SK-N-SH (cell line): ENCODE measurements at regions of chr16 and their contacts with region 1.

Region 1: GRCh38 chr16:67521095-67521804 is 7.4 kb upstream of the RIPOR1 start:
- DNase-seq: peak; percentile 89
- H3K4me3 ChIP-seq: peak overlapping the region; percentile 52 to 73
- H3K27ac ChIP-seq: peak overlapping the region; percentile 86 to 91
- H3K4me1 ChIP-seq: peaks cover 3 to 5% of the 10 kb centered on the region in 2 experiments; a peak in 2 of 4 replicates
- H3K27me3 ChIP-seq: no peaks in the 10 kb centered on the region
- CTCF ChIP-seq: peak; percentile 84
- EP300 ChIP-seq: peak in 1 of 2 experiments; percentile 2; a peak in 1 of 4 replicates
- RAD21 ChIP-seq: peak; percentile 94

Region 2: DNA sequence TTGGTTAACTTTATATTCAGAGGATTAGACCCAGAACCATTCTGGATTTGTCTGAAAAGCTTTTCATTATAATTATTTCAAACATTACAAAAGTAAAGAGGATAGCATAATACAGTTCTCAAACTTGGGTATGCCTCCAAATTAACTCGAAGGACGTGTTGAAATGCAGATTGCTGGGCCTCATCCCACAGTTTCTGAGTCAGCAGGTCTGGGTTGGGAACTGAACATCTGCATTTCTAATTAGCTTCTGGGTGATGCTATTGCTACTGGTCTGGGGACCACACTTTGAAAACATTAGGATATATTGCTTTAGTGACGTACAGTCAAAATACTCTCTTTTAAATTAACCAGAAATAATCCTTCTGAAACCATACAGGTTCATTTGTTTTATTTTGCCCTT is 138.0 kb before region 1 on chr16:
- CTCF ChIA-PET with region 1: no interaction called
- POLR2A ChIA-PET with region 1: no interaction called
- DNase-seq: no peak
- H3K4me3 ChIP-seq: no peak overlapping the region
- H3K27ac ChIP-seq: no peak overlapping the region
- H3K4me1 ChIP-seq: peaks cover 4 to 10% of the 10 kb centered on the region in 2 experiments; a peak in 2 of 4 replicates
- H3K27me3 ChIP-seq: no peaks in the 10 kb centered on the region
- CTCF ChIP-seq: no peak
- EP300 ChIP-seq: no peak
- RAD21 ChIP-seq: no peak

Region 3: GRCh38 chr16:67480833-67481560 is 40.3 kb before region 1 on chr16 and contains the start of gene ATP6V0D1:
- CTCF ChIA-PET with region 1: interaction called, 57 read pairs
- POLR2A ChIA-PET with region 1: interaction called, 6 read pairs
- DNase-seq: peak; percentile 98
- H3K4me3 ChIP-seq: peak within 1 kb of the TSS; percentile 80 to 100
- H3K27ac ChIP-seq: peak within 1 kb of the TSS; percentile 89 to 91
- H3K4me1 ChIP-seq: peaks cover 6 to 19% of the 10 kb centered on the region in 2 experiments; a peak in 1 of 4 replicates
- H3K27me3 ChIP-seq: no peaks in the 10 kb centered on the region
- CTCF ChIP-seq: peak; percentile 79
- EP300 ChIP-seq: no peak
- RAD21 ChIP-seq: peak; percentile 68
- polyA plus RNA-seq, gene ATP6V0D1: 111 and 135 TPM in 2 replicates

Region 4: GRCh38 chr16:67504041-67505021 is 16.9 kb before region 1 on chr16:
- CTCF ChIA-PET with region 1: interaction called, 104 read pairs
- POLR2A ChIA-PET with region 1: no interaction called
- DNase-seq: no peak
- H3K4me3 ChIP-seq: no peak overlapping the region
- H3K27ac ChIP-seq: no peak overlapping the region
- H3K4me1 ChIP-seq: no peaks in the 10 kb centered on the region
- H3K27me3 ChIP-seq: no peaks in the 10 kb centered on the region
- CTCF ChIP-seq: no peak
- EP300 ChIP-seq: no peak
- RAD21 ChIP-seq: no peak

Region 5: GRCh38 chr16:67555795-67556212 is 34.6 kb after region 1 on chr16:
- CTCF ChIA-PET with region 1: interaction called, 86 read pairs
- POLR2A ChIA-PET with region 1: no interaction called
- DNase-seq: no peak
- H3K4me3 ChIP-seq: no peak overlapping the region
- H3K27ac ChIP-seq: peak overlapping the region in 1 of 2 experiments; percentile 51; a peak in 2 of 4 replicates
- H3K4me1 ChIP-seq: peaks cover under 1 to 11% of the 10 kb centered on the region in 2 experiments; a peak in 2 of 4 replicates
- H3K27me3 ChIP-seq: no peaks in the 10 kb centered on the region
- CTCF ChIP-seq: no peak
- EP300 ChIP-seq: no peak
- RAD21 ChIP-seq: no peak

Region 6: GRCh38 chr16:67632415-67633172 is 111.3 kb after region 1 on chr16:
- CTCF ChIA-PET with region 1: interaction called, 11 read pairs
- POLR2A ChIA-PET with region 1: no interaction called
- DNase-seq: no peak
- H3K4me3 ChIP-seq: no peak overlapping the region
- H3K27ac ChIP-seq: no peak overlapping the region
- H3K4me1 ChIP-seq: no peaks in the 10 kb centered on the region
- H3K27me3 ChIP-seq: no peaks in the 10 kb centered on the region
- CTCF ChIP-seq: no peak
- EP300 ChIP-seq: no peak
- RAD21 ChIP-seq: no peak

Region 7: GRCh38 chr16:67667817-67668494 is 146.7 kb after region 1 on chr16:
- CTCF ChIA-PET with region 1: interaction called, 246 read pairs
- POLR2A ChIA-PET with region 1: no interaction called
- DNase-seq: peak; percentile 95
- H3K4me3 ChIP-seq: peak overlapping the region; percentile 19 to 67; a peak in 2 of 4 replicates
- H3K27ac ChIP-seq: peak overlapping the region; percentile 56 to 86; a peak in 3 of 4 replicates
- H3K4me1 ChIP-seq: peaks cover 12 to 31% of the 10 kb centered on the region in 2 experiments; a peak in 2 of 4 replicates
- H3K27me3 ChIP-seq: no peaks in the 10 kb centered on the region
- CTCF ChIP-seq: peak; percentile 82
- EP300 ChIP-seq: no peak
- RAD21 ChIP-seq: peak; percentile 74

Region 8: GRCh38 chr16:68079626-68080344 is 558.5 kb after region 1 on chr16:
- CTCF ChIA-PET with region 1: no interaction called
- POLR2A ChIA-PET with region 1: no interaction called
- DNase-seq: no peak
- H3K4me3 ChIP-seq: no peak overlapping the region
- H3K27ac ChIP-seq: no peak overlapping the region
- H3K4me1 ChIP-seq: peaks cover 6 to 10% of the 10 kb centered on the region in 2 experiments; a peak in 1 of 4 replicates
- H3K27me3 ChIP-seq: no peaks in the 10 kb centered on the region
- CTCF ChIP-seq: no peak
- EP300 ChIP-seq: no peak
- RAD21 ChIP-seq: no peak